Heart left ventricle (tissue), 16 donors: ENCODE measurements at regions of chr9 and their contacts with region 1.

Region 1: GRCh38 chr9:130860458-130861316 is 25.6 kb downstream of the ABL1 start:
- DNase-seq: peak; percentile 83 to 91 (median 86)
- ATAC-seq: peak; percentile 77 to 97 (median 94)
- H3K4me3 ChIP-seq: peak overlapping the region in 2 of 12 donors; percentile 17 to 19
- H3K27ac ChIP-seq: peak overlapping the region; percentile 4 to 85 (median 70)
- H3K4me1 ChIP-seq: peaks cover 2 to 62% (median 46%) of the 10 kb centered on the region in 12 donors
- H3K27me3 ChIP-seq: no peaks in the 10 kb centered on the region
- CTCF ChIP-seq: peak; percentile 19 to 78 (median 56)
- POLR2A ChIP-seq: no peak

Region 2: GRCh38 chr9:130701056-130702022 is 159.3 kb before region 1 on chr9:
- intact Hi-C with region 1: loop called in 6 of 10 experiments (anchors 2 to 5 kb)
- DNase-seq: peak; percentile 80 to 89 (median 82)
- ATAC-seq: peak; percentile 90 to 96 (median 92)
- H3K4me3 ChIP-seq: no peak overlapping the region
- H3K27ac ChIP-seq: peak overlapping the region in 4 of 12 donors; percentile 3 to 50 (median 15)
- H3K4me1 ChIP-seq: peaks cover 0 to 17% (median 8%) of the 10 kb centered on the region in 12 donors
- H3K27me3 ChIP-seq: no peaks in the 10 kb centered on the region
- CTCF ChIP-seq: peak; percentile 90 to 97 (median 93)
- POLR2A ChIP-seq: no peak

Region 3: GRCh38 chr9:130707225-130707976 is 153.3 kb before region 1 on chr9:
- intact Hi-C with region 1: loop called in 9 of 10 experiments (anchors 1 to 5 kb)
- DNase-seq: peak in 3 of 5 donors; percentile 61 to 77 (median 71)
- ATAC-seq: peak in 1 of 4 donors; percentile 27
- H3K4me3 ChIP-seq: no peak overlapping the region
- H3K27ac ChIP-seq: no peak overlapping the region
- H3K4me1 ChIP-seq: peaks cover 0 to 9% (median 0%) of the 10 kb centered on the region in 12 donors
- H3K27me3 ChIP-seq: no peaks in the 10 kb centered on the region
- CTCF ChIP-seq: peak; percentile 65 to 85 (median 82)
- POLR2A ChIP-seq: no peak

Region 4: GRCh38 chr9:130770679-130771442 is 89.8 kb before region 1 on chr9:
- intact Hi-C with region 1: loop called (anchors 1 to 5 kb)
- DNase-seq: no peak
- ATAC-seq: peak; percentile 38 to 77 (median 76)
- H3K4me3 ChIP-seq: no peak overlapping the region
- H3K27ac ChIP-seq: no peak overlapping the region
- H3K4me1 ChIP-seq: peaks cover 0 to 36% (median 20%) of the 10 kb centered on the region in 12 donors
- H3K27me3 ChIP-seq: no peaks in the 10 kb centered on the region
- CTCF ChIP-seq: peak; percentile 49 to 80 (median 68)
- POLR2A ChIP-seq: peak in 1 of 2 donors; percentile 25

Region 5: DNA sequence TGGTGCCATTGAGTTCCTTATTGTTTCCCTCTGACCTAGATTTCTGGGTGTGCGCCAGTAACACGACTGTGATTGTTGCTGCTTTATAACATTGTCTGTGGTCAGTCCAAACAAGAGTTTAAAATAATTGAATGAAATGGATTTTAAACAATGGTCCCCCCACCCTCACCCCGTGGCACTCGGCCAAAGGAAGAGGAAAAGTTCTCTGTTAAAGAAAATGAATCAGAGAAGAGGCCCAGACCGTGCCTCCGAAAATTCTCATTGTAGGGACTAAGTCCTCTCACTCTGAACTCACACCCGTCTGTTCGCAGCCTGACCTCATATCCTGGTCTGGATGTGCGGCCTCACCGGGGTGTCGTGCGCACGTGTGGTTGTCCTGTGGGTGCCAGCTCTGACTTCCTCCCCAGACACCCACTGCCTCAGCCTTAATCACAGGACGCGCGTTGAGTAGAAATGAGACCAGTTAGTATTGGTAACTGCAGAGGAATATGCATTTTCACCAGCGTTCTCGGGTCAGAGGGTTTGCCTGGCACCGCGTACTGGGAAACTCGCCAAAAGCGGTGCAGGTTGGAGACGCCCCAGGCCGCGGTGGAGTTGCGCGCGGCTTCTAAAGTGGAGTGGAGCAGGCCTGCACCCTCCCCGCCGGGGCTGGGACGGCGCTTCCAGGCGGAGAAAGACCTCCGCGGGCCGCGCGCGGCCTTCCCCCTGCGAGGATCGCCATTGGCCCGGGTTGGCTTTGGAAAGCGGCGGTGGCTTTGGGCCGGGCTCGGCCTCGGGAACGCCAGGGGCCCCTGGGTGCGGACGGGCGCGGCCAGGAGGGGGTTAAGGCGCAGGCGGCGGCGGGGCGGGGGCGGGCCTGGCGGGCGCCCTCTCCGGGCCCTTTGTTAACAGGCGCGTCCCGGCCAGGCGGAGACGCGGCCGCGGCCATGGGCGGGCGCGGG is 26.0 kb before region 1 on chr9 and contains the start of gene ABL1:
- intact Hi-C with region 1: loop called in 1 of 10 experiments (anchors 2 kb)
- DNase-seq: peak; percentile 80 to 88 (median 82)
- ATAC-seq: peak; percentile 69 to 92 (median 85)
- H3K4me3 ChIP-seq: peak within 1 kb of the TSS; percentile 38 to 92 (median 70)
- H3K27ac ChIP-seq: peak within 1 kb of the TSS; percentile 80 to 97 (median 94)
- H3K4me1 ChIP-seq: peaks cover 8 to 76% (median 57%) of the 10 kb centered on the region in 12 donors
- H3K27me3 ChIP-seq: no peaks in the 10 kb centered on the region
- CTCF ChIP-seq: peak in 1 of 12 donors; percentile 17
- POLR2A ChIP-seq: peak in 1 of 2 donors; percentile 14
- total RNA-seq, gene ABL1: 27.2 to 49.8 (median 34.1) TPM

Region 6: GRCh38 chr9:130895481-130896232 is 35.0 kb after region 1 on chr9:
- intact Hi-C with region 1: no loop called
- DNase-seq: no peak
- ATAC-seq: peak; percentile 31 to 63 (median 51)
- H3K4me3 ChIP-seq: no peak overlapping the region
- H3K27ac ChIP-seq: peak overlapping the region in 1 of 12 donors; percentile 66
- H3K4me1 ChIP-seq: peaks cover 0 to 35% (median 17%) of the 10 kb centered on the region in 12 donors
- H3K27me3 ChIP-seq: peaks cover 0 to 8% (median 0%) of the 10 kb centered on the region in 9 donors
- CTCF ChIP-seq: no peak
- POLR2A ChIP-seq: no peak

Region 7: DNA sequence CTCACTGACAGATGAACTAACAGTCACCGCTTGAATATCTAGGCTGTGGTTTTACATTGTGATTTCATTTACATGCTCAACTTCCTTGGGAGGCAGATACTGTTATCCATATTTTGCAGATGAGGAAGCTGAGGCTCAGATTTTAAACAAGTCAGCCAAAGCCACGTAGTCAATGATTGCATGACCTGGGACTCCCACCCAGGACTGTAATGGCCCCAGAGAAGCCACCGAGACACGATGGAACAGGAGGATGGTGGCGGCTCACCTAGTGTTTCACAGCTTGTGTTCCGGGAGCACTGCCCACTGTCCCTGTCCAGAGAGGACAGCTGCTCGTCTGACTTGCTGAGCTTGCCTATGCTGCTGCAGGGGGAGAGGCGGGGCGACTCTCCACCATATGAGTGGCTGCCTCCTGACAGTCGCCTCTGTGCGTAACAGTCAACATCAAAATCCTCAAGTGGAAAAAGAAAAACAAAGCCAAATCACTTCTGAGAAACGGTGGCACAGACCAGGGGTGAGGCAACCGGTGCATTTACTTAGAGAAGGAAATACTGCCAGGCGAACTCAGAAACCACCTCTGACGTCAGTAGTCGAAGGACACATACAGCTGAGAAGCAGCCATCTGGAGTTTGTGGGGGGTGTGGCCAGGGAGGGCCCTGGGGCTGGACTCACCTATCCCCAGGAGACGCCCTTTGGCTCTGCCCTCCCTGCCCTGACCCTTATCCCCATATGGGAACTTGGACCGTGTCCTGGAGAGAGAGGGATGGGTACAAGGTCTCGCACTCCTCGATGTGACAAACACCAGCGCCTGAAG is 767.2 kb after region 1 on chr9:
- intact Hi-C with region 1: no loop called
- DNase-seq: peak in 2 of 5 donors; percentile 50 to 85
- ATAC-seq: peak; percentile 21 to 56 (median 43)
- H3K4me3 ChIP-seq: peak overlapping the region in 1 of 12 donors; percentile 2
- H3K27ac ChIP-seq: peak overlapping the region in 7 of 12 donors; percentile 10 to 91 (median 43)
- H3K4me1 ChIP-seq: peaks cover 11 to 71% (median 38%) of the 10 kb centered on the region in 12 donors
- H3K27me3 ChIP-seq: no peaks in the 10 kb centered on the region
- CTCF ChIP-seq: no peak
- POLR2A ChIP-seq: no peak